Calu3 (cell line): ENCODE measurements at regions of chr5 and their contacts with region 1.

Region 1: GRCh38 chr5:39648532-39649213 is 223.9 kb upstream of the DAB2 start:
- DNase-seq: peak; percentile 65
- H3K4me3 Mint-ChIP-seq: no peak overlapping the region
- H3K27ac Mint-ChIP-seq: peak overlapping the region; percentile 70
- H3K4me1 Mint-ChIP-seq: peaks cover 31% of the 10 kb centered on the region
- H3K27me3 Mint-ChIP-seq: no peaks in the 10 kb centered on the region
- CTCF ChIP-seq: no peak

Region 2: DNA sequence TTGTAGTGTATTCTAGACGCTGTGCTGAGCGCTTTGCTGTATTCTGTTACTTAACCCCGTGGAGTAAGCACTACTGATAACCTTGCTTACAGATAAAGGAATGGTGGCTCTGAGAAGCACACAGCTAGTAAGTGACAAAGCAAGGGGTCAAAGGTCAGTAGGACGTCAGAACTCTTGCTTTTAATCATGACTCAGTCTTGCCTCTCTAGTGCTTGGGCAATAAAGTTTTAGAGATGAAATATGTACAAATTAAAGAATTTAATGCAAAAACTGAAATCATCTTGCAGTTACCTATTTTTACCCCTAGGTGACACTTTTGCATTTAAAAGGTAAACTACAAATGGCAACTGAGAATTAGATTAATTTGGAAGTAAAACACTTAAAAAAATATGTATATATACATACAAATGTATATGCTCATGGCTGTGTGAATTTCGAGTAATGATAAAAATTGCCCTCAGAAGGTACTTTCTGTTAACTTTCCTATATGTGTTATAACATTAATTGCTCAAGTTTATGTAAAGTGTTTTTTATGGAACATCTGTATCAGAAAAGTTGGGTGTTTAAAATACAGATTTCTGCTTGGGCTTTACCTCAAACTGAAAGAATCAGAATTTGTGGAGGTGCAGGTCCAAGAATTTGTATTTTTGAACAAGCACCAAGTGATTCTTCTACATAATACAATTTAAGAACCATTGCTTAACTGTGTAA is 48.8 kb before region 1 on chr5:
- CTCF ChIA-PET with region 1: no interaction called
- intact Hi-C with region 1: loop called (anchors 2 kb)
- DNase-seq: no peak
- H3K4me3 Mint-ChIP-seq: no peak overlapping the region
- H3K27ac Mint-ChIP-seq: no peak overlapping the region
- H3K4me1 Mint-ChIP-seq: no peaks in the 10 kb centered on the region
- H3K27me3 Mint-ChIP-seq: no peaks in the 10 kb centered on the region
- CTCF ChIP-seq: peak; percentile 33